ENCODE measurements at regions of chr16 and their contacts with region 1.

Region 1: GRCh38 chr16:19086322-19087199 is 19.1 kb downstream of the COQ7 start:
- DNase-seq: peak; percentile 81
- ATAC-seq: peak; percentile 99
- H3K4me3 Mint-ChIP-seq: peak overlapping the region; percentile 57
- H3K27ac Mint-ChIP-seq: no peak overlapping the region
- H3K4me1 Mint-ChIP-seq: peaks cover 7% of the 10 kb centered on the region
- H3K27me3 Mint-ChIP-seq: peaks cover 9% of the 10 kb centered on the region

Region 2: DNA sequence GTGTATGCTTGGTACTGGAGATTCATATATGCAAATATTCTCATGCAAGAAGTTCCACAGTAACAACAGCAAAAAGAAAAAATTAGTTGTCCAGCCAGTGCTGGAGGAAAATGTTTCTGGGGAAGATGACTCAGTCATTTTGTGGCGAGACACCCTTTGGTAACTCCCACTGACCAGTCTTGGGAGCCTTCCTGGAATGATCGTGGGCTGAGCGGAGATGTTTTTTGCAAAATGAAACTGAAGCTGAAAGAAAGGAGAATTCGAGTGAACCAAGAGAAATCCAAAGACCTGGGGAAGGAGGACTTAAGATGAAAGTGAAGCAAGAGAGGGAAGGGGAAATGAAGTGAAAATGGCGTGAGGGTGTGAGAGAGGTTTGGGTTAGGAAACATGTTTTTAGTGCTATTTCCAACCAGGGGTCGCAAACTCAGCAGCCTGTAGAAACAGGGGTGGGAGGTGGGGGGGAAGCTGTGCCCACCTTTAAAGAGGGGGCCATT is 32.4 kb after region 1 on chr16:
- CTCF ChIA-PET with region 1: interaction called, 16 read pairs
- POLR2A ChIA-PET with region 1: no interaction called
- DNase-seq: no peak
- ATAC-seq: peak; percentile 13
- H3K4me3 Mint-ChIP-seq: peak overlapping the region; percentile 68
- H3K27ac Mint-ChIP-seq: peak overlapping the region; percentile 84
- H3K4me1 Mint-ChIP-seq: peaks cover 27% of the 10 kb centered on the region
- H3K27me3 Mint-ChIP-seq: peaks cover 9% of the 10 kb centered on the region

Region 3: GRCh38 chr16:19179546-19180490 is 93.3 kb after region 1 on chr16:
- CTCF ChIA-PET with region 1: interaction called, 41 read pairs
- POLR2A ChIA-PET with region 1: no interaction called
- DNase-seq: peak; percentile 48
- ATAC-seq: no peak
- H3K4me3 Mint-ChIP-seq: no peak overlapping the region
- H3K27ac Mint-ChIP-seq: no peak overlapping the region
- H3K4me1 Mint-ChIP-seq: no peaks in the 10 kb centered on the region
- H3K27me3 Mint-ChIP-seq: no peaks in the 10 kb centered on the region

Region 4: GRCh38 chr16:19374402-19374801 is 287.8 kb after region 1 on chr16:
- CTCF ChIA-PET with region 1: interaction called, 10 read pairs
- POLR2A ChIA-PET with region 1: no interaction called
- DNase-seq: no peak
- ATAC-seq: no peak
- H3K4me3 Mint-ChIP-seq: no peak overlapping the region
- H3K27ac Mint-ChIP-seq: no peak overlapping the region
- H3K4me1 Mint-ChIP-seq: no peaks in the 10 kb centered on the region
- H3K27me3 Mint-ChIP-seq: peaks cover 2% of the 10 kb centered on the region